ENCODE measurements at regions of chr16 and their contacts with region 1.

Region 1: DNA sequence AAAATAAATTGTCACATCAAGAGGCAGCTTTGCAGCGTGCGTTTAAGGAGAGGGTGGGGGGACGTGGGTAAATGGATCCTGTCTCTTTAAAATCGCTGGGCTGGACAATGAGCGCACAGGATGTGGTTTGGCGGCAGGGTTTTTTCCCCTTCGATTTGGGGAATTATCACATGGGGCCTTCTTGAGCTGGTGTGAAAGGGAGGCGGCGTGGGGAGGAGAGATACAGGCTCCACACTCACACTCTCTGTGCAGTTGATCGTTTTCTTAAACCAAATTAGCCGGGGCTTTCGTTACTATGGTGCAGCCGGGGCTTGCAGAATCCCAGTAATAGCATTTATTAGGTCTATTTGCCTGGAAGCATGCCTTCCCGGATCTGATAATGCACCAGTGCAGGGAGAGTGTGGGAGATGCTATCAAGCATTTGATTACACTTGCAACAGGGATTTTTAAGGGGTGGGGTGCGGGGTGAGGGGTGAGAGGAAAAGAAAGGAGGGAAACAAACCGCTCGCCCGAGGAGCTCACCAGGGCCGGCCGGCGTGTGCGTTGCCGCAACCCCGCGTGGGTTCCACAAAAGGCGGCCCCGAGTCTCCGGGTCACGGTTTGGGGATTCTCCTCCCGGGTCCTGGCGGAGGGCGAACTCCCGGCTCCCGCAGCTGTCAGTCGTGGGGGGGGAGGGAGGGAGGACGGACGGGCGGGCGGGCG is 58.9 kb upstream of the GSE1 start:
- DNase-seq: peak; percentile 89
- H3K4me3 Mint-ChIP-seq: peak overlapping the region; percentile 93
- H3K27ac Mint-ChIP-seq: peak overlapping the region; percentile 98
- H3K4me1 Mint-ChIP-seq: peaks cover 38% of the 10 kb centered on the region
- H3K27me3 Mint-ChIP-seq: peaks cover 5% of the 10 kb centered on the region

Region 2: DNA sequence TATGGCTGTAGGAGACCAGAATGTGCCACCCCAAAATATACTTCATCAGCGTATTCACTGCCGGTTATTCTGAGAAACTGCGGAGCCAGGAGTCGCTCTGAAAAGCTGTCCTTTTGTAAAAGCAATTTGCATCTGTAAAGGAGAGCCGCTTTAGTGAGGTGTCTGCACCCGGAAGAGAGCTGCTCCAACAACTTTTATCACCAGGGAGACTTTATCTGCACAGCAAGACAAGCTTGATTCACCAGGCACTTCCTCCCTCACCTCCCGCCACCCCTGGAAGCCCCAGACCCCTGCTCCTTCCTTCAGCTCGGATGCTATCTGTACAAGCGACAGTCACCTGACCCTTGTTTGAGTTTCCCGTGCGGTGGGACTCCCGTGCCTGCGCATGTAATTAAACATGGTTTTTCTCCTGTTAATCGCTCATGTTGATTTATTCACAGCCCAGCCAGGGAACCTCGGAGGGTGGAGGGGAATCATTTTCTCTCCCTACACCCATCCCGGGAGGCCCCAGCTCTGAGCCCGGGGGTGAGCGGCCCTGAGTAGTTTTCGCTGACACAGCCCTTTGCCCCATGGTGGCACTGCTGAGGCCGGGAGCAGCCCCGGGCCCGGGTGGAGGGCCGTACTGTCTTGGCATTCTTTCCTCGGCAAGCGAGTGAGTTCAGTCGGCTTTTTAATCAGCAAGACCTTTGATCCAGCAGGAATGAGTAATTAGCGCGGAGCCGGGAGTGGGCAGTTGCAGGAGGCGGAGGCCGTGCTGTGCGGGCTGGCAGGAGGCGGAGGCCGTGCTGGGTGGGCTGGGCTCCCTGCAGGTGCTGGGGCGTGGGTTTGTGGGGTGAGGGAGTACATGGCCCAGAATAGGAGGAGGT is 219.3 kb before region 1 on chr16:
- CTCF ChIA-PET with region 1: no interaction called
- POLR2A ChIA-PET with region 1: no interaction called
- DNase-seq: no peak
- H3K4me3 Mint-ChIP-seq: no peak overlapping the region
- H3K27ac Mint-ChIP-seq: no peak overlapping the region
- H3K4me1 Mint-ChIP-seq: peaks cover 5% of the 10 kb centered on the region
- H3K27me3 Mint-ChIP-seq: peaks cover 10% of the 10 kb centered on the region

Region 3: GRCh38 chr16:85564277-85565051 is 10.2 kb after region 1 on chr16:
- CTCF ChIA-PET with region 1: interaction called, 11 read pairs
- POLR2A ChIA-PET with region 1: interaction called, 37 read pairs
- DNase-seq: peak; percentile 27
- H3K4me3 Mint-ChIP-seq: no peak overlapping the region
- H3K27ac Mint-ChIP-seq: no peak overlapping the region
- H3K4me1 Mint-ChIP-seq: peaks cover 26% of the 10 kb centered on the region
- H3K27me3 Mint-ChIP-seq: no peaks in the 10 kb centered on the region

Region 4: GRCh38 chr16:85569615-85570212 is 15.5 kb after region 1 on chr16:
- CTCF ChIA-PET with region 1: interaction called, 11 read pairs
- POLR2A ChIA-PET with region 1: interaction called, 37 read pairs
- DNase-seq: peak; percentile 51
- H3K4me3 Mint-ChIP-seq: peak overlapping the region; percentile 43
- H3K27ac Mint-ChIP-seq: peak overlapping the region; percentile 72
- H3K4me1 Mint-ChIP-seq: peaks cover 50% of the 10 kb centered on the region
- H3K27me3 Mint-ChIP-seq: no peaks in the 10 kb centered on the region